ENCODE measurements at regions of chr4 and their contacts with region 1.

Region 1: DNA sequence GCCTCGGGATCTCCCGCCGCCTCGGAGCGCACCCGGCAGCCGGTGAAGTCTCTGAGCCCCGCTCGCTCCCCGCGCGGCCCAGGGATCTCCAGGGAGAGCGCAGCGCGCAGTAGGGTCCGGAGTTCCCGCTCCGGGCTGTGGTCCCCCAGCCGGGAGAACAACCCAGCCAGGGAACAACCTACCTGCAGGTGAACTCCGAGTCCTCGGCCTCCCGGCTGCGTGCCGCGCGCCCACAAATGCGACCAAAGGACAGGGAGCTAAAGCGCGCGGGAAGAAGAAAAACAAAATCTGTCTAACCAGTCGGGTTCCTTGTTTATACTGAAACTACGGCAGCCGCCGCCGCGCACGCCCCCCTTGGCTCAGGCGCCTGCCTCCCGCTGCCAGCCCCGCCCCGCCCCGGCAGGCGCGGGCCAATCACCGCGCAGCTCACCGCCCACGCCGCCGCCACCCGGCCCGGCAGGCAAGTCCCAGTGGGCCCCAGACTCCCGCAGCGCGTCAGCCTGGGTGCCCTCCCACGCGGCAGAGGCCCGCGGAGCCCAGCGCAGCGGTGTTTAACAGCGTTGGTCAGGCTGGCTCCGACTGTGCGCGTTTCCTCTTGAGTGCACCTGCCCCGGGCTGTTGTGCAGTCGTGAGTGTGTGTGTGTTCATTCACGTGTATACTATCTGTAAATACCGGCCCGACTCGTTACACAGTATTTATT is at the start of gene RASGEF1B:
- DNase-seq: peak; percentile 91
- ATAC-seq: peak; percentile 93
- H3K4me3 Mint-ChIP-seq: peak within 1 kb of the TSS; percentile 86
- H3K27ac Mint-ChIP-seq: peak within 1 kb of the TSS; percentile 92
- H3K4me1 Mint-ChIP-seq: peaks cover 35% of the 10 kb centered on the region
- H3K27me3 Mint-ChIP-seq: no peaks in the 10 kb centered on the region
- total RNA-seq, gene RASGEF1B: 2.0 to 2.4 TPM

Region 2: DNA sequence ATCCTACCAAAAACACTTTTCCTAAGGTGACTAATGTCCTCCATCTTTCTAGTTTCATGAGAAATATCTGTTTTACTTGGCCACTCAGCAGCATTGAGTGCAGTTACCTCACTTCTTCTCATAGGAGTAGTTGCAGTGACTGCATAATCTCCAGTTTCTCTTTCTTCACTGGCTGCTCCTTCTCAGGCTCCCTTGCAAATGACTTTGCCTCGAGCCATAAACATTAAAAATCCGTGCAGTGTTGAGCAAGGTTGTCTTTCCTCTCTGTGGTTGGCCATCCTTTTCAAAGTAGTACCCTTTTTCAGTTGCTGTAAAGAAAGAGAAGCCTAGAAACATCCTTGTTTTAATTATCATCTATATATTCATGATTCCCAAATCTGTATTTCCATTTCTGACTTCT is 246.5 kb before region 1 on chr4:
- CTCF ChIA-PET with region 1: no interaction called
- POLR2A ChIA-PET with region 1: no interaction called
- DNase-seq: no peak
- ATAC-seq: no peak
- H3K4me3 Mint-ChIP-seq: no peak overlapping the region
- H3K27ac Mint-ChIP-seq: no peak overlapping the region
- H3K4me1 Mint-ChIP-seq: no peaks in the 10 kb centered on the region
- H3K27me3 Mint-ChIP-seq: peaks cover 5% of the 10 kb centered on the region

Region 3: DNA sequence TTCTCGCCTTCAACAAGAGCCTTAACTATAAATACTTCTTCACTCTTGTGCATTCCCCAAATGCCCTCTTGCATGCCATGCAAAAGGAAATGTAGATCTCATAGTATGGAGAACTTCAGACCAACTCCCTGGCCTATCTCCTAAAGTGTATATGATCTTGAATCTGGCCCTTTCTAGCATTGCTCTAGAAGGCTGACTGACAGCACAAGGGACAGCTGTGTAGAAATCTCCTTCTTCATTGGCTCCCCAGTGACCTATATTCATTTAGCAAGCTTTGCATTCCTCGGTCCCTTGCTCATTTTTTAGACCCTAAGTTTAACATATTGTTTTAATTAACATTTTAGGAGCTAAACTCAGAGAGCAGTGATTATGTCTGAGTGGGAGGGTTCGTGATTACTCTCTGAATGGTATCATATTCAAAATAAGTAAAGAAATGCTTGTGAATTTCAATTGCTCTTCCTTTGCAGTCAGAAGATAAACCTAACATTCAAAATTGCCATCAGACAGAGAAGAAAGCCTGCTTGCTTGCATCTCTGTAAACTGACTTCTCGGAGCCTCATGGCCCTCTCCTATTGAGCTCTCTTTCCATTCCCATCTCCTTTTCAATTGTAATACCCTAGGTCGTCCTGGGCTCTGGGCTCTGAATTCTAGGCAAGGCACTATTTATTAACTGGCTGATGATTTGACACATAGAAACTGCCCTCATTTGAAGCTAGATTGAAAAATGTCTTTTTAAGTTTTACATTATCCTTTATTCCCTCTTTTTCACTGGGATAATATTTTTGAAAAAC is 136.4 kb before region 1 on chr4:
- CTCF ChIA-PET with region 1: no interaction called
- POLR2A ChIA-PET with region 1: no interaction called
- DNase-seq: no peak
- ATAC-seq: no peak
- H3K4me3 Mint-ChIP-seq: no peak overlapping the region
- H3K27ac Mint-ChIP-seq: no peak overlapping the region
- H3K4me1 Mint-ChIP-seq: no peaks in the 10 kb centered on the region
- H3K27me3 Mint-ChIP-seq: no peaks in the 10 kb centered on the region

Region 4: GRCh38 chr4:81405894-81406401 is 65.8 kb before region 1 on chr4:
- CTCF ChIA-PET with region 1: interaction called, 28 read pairs
- POLR2A ChIA-PET with region 1: no interaction called
- DNase-seq: peak; percentile 69
- ATAC-seq: peak; percentile 75
- H3K4me3 Mint-ChIP-seq: no peak overlapping the region
- H3K27ac Mint-ChIP-seq: no peak overlapping the region
- H3K4me1 Mint-ChIP-seq: peaks cover 5% of the 10 kb centered on the region
- H3K27me3 Mint-ChIP-seq: no peaks in the 10 kb centered on the region

Region 5: GRCh38 chr4:81494031-81494431 is 22.3 kb after region 1 on chr4:
- CTCF ChIA-PET with region 1: interaction called, 24 read pairs
- POLR2A ChIA-PET with region 1: interaction called, 14 read pairs
- DNase-seq: no peak
- ATAC-seq: peak; percentile 55
- H3K4me3 Mint-ChIP-seq: peak overlapping the region; percentile 64
- H3K27ac Mint-ChIP-seq: peak overlapping the region; percentile 83
- H3K4me1 Mint-ChIP-seq: peaks cover 42% of the 10 kb centered on the region
- H3K27me3 Mint-ChIP-seq: no peaks in the 10 kb centered on the region

Region 6: GRCh38 chr4:81562093-81562492 is 90.4 kb after region 1 on chr4:
- CTCF ChIA-PET with region 1: interaction called, 11 read pairs
- POLR2A ChIA-PET with region 1: interaction called, 7 read pairs
- DNase-seq: no peak
- ATAC-seq: peak; percentile 95
- H3K4me3 Mint-ChIP-seq: peak overlapping the region; percentile 10
- H3K27ac Mint-ChIP-seq: peak overlapping the region; percentile 79
- H3K4me1 Mint-ChIP-seq: peaks cover 30% of the 10 kb centered on the region
- H3K27me3 Mint-ChIP-seq: no peaks in the 10 kb centered on the region

Region 7: GRCh38 chr4:81651243-81651899 is 179.6 kb after region 1 on chr4:
- CTCF ChIA-PET with region 1: interaction called, 15 read pairs
- POLR2A ChIA-PET with region 1: interaction called, 4 read pairs
- DNase-seq: no peak
- ATAC-seq: no peak
- H3K4me3 Mint-ChIP-seq: no peak overlapping the region
- H3K27ac Mint-ChIP-seq: no peak overlapping the region
- H3K4me1 Mint-ChIP-seq: peaks cover 46% of the 10 kb centered on the region
- H3K27me3 Mint-ChIP-seq: no peaks in the 10 kb centered on the region

Region 8: GRCh38 chr4:81839347-81840042 is 367.8 kb after region 1 on chr4:
- CTCF ChIA-PET with region 1: interaction called, 150 read pairs
- POLR2A ChIA-PET with region 1: no interaction called
- DNase-seq: no peak
- ATAC-seq: no peak
- H3K4me3 Mint-ChIP-seq: no peak overlapping the region
- H3K27ac Mint-ChIP-seq: no peak overlapping the region
- H3K4me1 Mint-ChIP-seq: no peaks in the 10 kb centered on the region
- H3K27me3 Mint-ChIP-seq: peaks cover 3% of the 10 kb centered on the region

Region 9: DNA sequence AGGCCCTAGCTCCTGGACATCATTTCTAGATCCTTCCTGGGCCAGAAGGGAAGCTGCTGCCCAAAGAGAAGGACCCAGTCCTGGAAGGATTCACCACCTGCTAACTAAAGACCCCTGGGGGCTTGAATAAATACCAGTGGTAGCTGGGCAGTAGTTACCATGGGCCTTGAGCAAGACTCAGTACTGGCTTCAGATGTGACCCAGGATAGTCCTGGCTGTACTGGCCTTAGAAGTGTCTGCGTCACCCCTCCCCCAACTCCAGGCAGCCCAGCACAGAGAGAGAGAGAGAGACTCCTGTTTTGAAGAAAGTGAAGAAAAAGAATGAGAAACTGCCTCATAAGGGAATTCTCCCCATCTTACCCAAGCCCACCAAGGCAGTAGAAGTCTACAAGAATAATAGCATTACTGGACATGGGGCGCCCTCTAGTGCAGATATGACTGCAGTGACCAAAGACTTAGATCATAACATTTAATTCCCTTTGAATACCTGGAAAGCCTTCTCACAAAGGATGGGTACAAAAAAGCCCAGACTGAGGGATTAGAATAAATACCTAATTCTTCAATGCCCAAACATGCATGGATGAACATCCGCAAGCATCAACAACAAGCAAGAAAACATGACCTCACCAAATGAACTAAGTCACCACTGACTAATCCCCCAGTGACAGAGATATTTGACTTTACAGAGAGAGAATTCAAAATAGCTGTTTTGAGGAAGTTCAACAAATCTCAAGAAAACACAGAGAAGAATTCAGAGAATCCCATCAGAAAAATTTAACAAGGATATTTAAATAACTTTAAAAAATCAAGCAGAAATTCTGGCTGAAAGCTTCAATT is 730.3 kb after region 1 on chr4:
- CTCF ChIA-PET with region 1: interaction called, 12 read pairs
- POLR2A ChIA-PET with region 1: no interaction called
- DNase-seq: peak; percentile 69
- ATAC-seq: peak; percentile 68
- H3K4me3 Mint-ChIP-seq: no peak overlapping the region
- H3K27ac Mint-ChIP-seq: no peak overlapping the region
- H3K4me1 Mint-ChIP-seq: peaks cover 4% of the 10 kb centered on the region
- H3K27me3 Mint-ChIP-seq: peaks cover 17% of the 10 kb centered on the region

Measured in activated CD8-positive, alpha-beta T cell treated with anti-CD3 and anti-CD28 coated beads, Interleukin-2, amount 10 ng/mL, durations not matched to agents 7 days and 5 days (primary cell).